HEK293 (cell line): ENCODE measurements at regions of chr7 and their contacts with region 1.

Region 1: GRCh38 chr7:101287032-101287431 is 34.6 kb downstream of the IFT22 start:
- H3K4me3 ChIP-seq: no peak overlapping the region
- H3K27ac ChIP-seq: no peak overlapping the region
- H3K4me1 ChIP-seq: no peaks in the 10 kb centered on the region
- CTCF ChIP-seq: no peak

Region 2: GRCh38 chr7:101251871-101252659 is 35.0 kb before region 1 on chr7:
- CTCF ChIA-PET with region 1: interaction called, 14 read pairs
- POLR2A ChIA-PET with region 1: no interaction called
- H3K4me3 ChIP-seq: peak overlapping the region; percentile 82
- H3K27ac ChIP-seq: peak overlapping the region; percentile 46
- H3K4me1 ChIP-seq: no peaks in the 10 kb centered on the region
- CTCF ChIP-seq: no peak

Region 3: DNA sequence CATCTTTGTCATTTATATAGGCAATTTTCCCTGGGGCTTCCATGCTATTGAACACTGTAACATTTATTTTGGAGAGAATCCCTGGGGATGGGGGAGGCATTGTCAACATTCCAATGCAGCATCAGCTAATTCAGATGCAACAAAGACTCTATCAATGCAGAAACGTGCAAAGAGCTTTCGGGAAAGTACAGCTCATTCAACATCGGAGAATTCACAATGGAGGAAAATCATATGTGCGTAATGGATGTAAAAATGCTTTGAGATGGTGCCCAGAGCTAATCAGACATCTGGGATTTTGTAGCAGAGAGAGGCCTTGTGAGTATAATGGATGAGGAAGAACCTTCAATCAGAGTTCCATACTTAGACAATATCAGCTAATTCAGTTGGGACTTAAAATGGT is 13.8 kb before region 1 on chr7:
- CTCF ChIA-PET with region 1: interaction called, 15 read pairs
- POLR2A ChIA-PET with region 1: no interaction called
- H3K4me3 ChIP-seq: no peak overlapping the region
- H3K27ac ChIP-seq: no peak overlapping the region
- H3K4me1 ChIP-seq: no peaks in the 10 kb centered on the region
- CTCF ChIP-seq: no peak

Region 4: DNA sequence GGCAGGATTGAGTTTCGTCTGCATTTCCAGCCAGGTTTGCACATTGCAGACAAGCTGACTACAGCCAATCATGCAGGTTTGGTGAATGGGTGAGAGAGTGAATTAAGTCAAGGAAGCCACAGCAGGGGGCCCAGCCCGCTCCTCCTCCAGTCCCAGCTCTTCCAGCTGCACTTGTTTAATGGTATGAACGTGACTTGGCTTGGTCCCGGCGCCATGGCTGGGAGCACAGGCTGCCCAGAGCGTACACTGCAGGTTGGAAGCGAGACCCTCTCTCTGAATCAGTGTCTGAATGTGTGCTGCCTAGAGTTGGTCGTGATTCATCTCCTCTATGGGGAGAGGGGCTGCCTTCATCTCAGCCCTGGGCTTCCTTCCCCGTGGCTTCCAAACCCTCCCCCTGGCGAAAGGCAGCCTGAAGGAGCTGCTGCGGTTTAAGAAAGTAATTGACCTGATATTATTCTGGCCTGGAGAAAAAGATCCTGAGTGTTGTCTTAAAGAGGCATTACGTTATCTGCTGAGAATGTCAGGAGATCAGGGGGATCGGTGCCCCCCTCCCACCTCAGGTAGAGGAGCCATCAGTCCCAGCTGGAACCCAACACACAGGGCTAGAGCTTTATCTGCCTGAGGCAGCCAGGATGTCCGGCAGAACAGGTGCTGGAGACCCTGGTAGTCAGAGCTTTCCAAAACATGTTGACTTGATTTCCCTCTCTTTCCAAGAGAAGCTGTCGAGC is 207.7 kb after region 1 on chr7:
- CTCF ChIA-PET with region 1: interaction called, 10 read pairs
- POLR2A ChIA-PET with region 1: no interaction called
- H3K4me3 ChIP-seq: no peak overlapping the region
- H3K27ac ChIP-seq: no peak overlapping the region
- H3K4me1 ChIP-seq: peaks cover 8% of the 10 kb centered on the region
- CTCF ChIP-seq: no peak